K562 (cell line): ENCODE measurements at regions of chr1 and their contacts with region 1.

Region 1: GRCh38 chr1:225999227-225999911 is at the start of gene SDE2:
- DNase-seq: peak; percentile 98 to 100 (median 98)
- ATAC-seq: peak; percentile 63
- H3K4me3 ChIP-seq: peak within 1 kb of the TSS; percentile 78
- H3K27ac ChIP-seq: peak within 1 kb of the TSS; percentile 98
- H3K4me1 ChIP-seq: peaks cover 36 to 68% of the 10 kb centered on the region in 2 experiments
- H3K27me3 ChIP-seq: no peaks in the 10 kb centered on the region
- CTCF ChIP-seq: 0 out of 6 replicates have a peak, but pooled peaks of 1 of the 3 experiments have one; percentile 1
- EP300 ChIP-seq: peak; percentile 96
- POLR2A ChIP-seq: peak; percentile 99
- RAD21 ChIP-seq: peak in 1 of 2 experiments; percentile 31
- polyA plus RNA-seq, gene SDE2: 14.3 to 19.3 TPM

Region 2: GRCh38 chr1:225891229-225891972 is 108.0 kb before region 1 on chr1:
- CTCF ChIA-PET with region 1: no interaction called
- POLR2A ChIA-PET with region 1: no interaction called
- in situ Hi-C with region 1: no loop called
- intact Hi-C with region 1: no loop called
- DNase-seq: peak in 1 of 4 experiments; percentile 13
- ATAC-seq: peak; percentile 19; the same call in 2 of the 3 replicates
- H3K4me3 ChIP-seq: no peak overlapping the region
- H3K27ac ChIP-seq: no peak overlapping the region
- H3K4me1 ChIP-seq: peaks cover 0 to 27% of the 10 kb centered on the region in 2 experiments; a peak in 3 of 5 replicates
- H3K27me3 ChIP-seq: no peaks in the 10 kb centered on the region
- CTCF ChIP-seq: no peak
- EP300 ChIP-seq: no peak
- POLR2A ChIP-seq: no peak
- RAD21 ChIP-seq: no peak

Region 3: GRCh38 chr1:225987491-225988316 is 11.7 kb before region 1 on chr1:
- CTCF ChIA-PET with region 1: interaction called, 3 read pairs
- POLR2A ChIA-PET with region 1: interaction called, 25 read pairs
- in situ Hi-C with region 1: no loop called
- intact Hi-C with region 1: no loop called
- DNase-seq: peak in 2 of 4 experiments; percentile 42 to 71
- ATAC-seq: peak; percentile 79
- H3K4me3 ChIP-seq: no peak overlapping the region
- H3K27ac ChIP-seq: no peak overlapping the region; the same call in 2 of the 3 replicates
- H3K4me1 ChIP-seq: no peaks in the 10 kb centered on the region
- H3K27me3 ChIP-seq: no peaks in the 10 kb centered on the region
- CTCF ChIP-seq: peak; percentile 62 to 82 (median 68); a peak in 5 of 6 replicates
- EP300 ChIP-seq: no peak
- POLR2A ChIP-seq: no peak
- RAD21 ChIP-seq: peak; percentile 62 to 74

Region 4: DNA sequence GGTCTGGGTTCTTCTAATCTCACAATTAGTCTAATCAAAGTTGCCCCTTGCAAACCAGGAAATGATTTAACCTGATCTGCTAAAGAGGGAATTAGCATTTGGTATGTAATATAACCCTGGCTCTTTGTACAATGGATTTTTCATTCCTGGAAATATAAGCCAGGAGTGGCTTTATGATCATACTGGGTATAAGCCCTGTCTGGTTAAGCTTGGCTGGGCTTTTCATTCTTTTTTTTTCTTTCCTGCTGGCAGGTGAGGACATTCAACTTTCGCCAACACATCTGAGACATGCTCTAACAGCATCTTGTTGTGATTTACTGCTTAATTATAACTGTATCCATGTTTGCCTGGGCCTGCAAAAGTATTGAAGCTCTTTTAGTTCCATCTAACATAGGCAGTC is 20.2 kb after region 1 on chr1:
- CTCF ChIA-PET with region 1: no interaction called
- POLR2A ChIA-PET with region 1: interaction called, 26 read pairs
- in situ Hi-C with region 1: no loop called
- intact Hi-C with region 1: no loop called
- DNase-seq: no peak
- ATAC-seq: no peak
- H3K4me3 ChIP-seq: no peak overlapping the region
- H3K27ac ChIP-seq: no peak overlapping the region
- H3K4me1 ChIP-seq: peaks cover 5 to 8% of the 10 kb centered on the region in 2 experiments; a peak in 3 of 5 replicates
- H3K27me3 ChIP-seq: no peaks in the 10 kb centered on the region
- CTCF ChIP-seq: no peak
- EP300 ChIP-seq: no peak
- POLR2A ChIP-seq: no peak
- RAD21 ChIP-seq: no peak

Region 5: DNA sequence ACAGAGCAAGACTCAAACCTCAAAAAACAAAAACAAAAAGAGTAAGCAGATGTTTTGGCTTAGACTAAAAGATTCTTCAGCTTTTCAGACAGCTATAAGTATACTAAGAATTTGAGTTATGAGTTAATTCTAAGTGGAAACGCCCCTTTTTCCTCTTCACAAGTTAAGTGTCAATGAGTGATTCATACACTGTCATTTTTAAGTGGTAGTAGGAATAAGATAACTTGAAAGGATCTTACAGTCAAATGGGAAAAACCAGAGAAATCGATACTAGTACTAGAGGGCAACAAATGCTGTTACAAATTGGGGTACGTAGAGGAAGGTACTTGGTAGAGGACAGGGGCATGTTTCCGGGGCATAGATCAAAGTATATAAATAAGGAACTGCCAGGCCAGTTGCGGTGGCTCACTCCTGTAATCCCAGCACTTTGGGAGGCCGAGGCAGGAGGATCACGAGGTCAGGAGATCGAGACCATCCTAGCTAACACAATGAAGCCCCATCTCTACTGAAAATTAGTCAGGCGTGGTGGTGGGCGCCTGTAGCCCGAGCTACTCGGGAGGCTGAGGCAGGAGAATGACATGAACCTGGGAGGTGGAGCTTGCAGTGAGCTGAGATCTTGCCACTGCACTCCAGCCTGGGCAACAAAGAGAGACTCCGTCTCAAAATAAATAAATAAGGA is 70.6 kb after region 1 on chr1:
- CTCF ChIA-PET with region 1: interaction called, 11 read pairs
- POLR2A ChIA-PET with region 1: interaction called, 35 read pairs
- in situ Hi-C with region 1: no loop called
- intact Hi-C with region 1: no loop called
- DNase-seq: no peak
- ATAC-seq: no peak
- H3K4me3 ChIP-seq: no peak overlapping the region
- H3K27ac ChIP-seq: no peak overlapping the region
- H3K4me1 ChIP-seq: peaks cover 0 to 18% of the 10 kb centered on the region in 2 experiments; a peak in 3 of 5 replicates
- H3K27me3 ChIP-seq: no peaks in the 10 kb centered on the region
- CTCF ChIP-seq: no peak
- EP300 ChIP-seq: no peak
- POLR2A ChIP-seq: no peak
- RAD21 ChIP-seq: no peak